ENCODE measurements at regions of chr2 and their contacts with region 1.

Region 1: GRCh38 chr2:18149645-18150246 is 271.3 kb downstream of the KCNS3 start:
- DNase-seq: peak; percentile 24
- H3K4me3 ChIP-seq: no peak overlapping the region
- H3K27ac ChIP-seq: no peak overlapping the region
- H3K4me1 ChIP-seq: no peaks in the 10 kb centered on the region
- H3K27me3 ChIP-seq: no peaks in the 10 kb centered on the region
- CTCF ChIP-seq: peak; percentile 82 to 84

Region 2: GRCh38 chr2:17719562-17720371 is 430.0 kb before region 1 on chr2:
- CTCF ChIA-PET with region 1: no interaction called
- dilution Hi-C with region 1: no loop called
- in situ Hi-C with region 1: no loop called
- intact Hi-C with region 1: loop called (anchors 1 kb)
- DNase-seq: peak; percentile 1
- H3K4me3 ChIP-seq: no peak overlapping the region
- H3K27ac ChIP-seq: no peak overlapping the region
- H3K4me1 ChIP-seq: no peaks in the 10 kb centered on the region
- H3K27me3 ChIP-seq: no peaks in the 10 kb centered on the region
- CTCF ChIP-seq: peak; percentile 71 to 74

Region 3: GRCh38 chr2:17753803-17754663 is 395.7 kb before region 1 on chr2 and contains the starts of genes GEN1 and SMC6:
- CTCF ChIA-PET with region 1: no interaction called
- dilution Hi-C with region 1: no loop called
- in situ Hi-C with region 1: no loop called
- intact Hi-C with region 1: loop called (anchors 10 kb)
- DNase-seq: peak; percentile 89
- H3K4me3 ChIP-seq: peak within 1 kb of the TSS; percentile 95 to 98 (median 97)
- H3K27ac ChIP-seq: peak within 1 kb of the TSS; percentile 94
- H3K4me1 ChIP-seq: peaks cover 27% of the 10 kb centered on the region
- H3K27me3 ChIP-seq: no peaks in the 10 kb centered on the region
- CTCF ChIP-seq: no peak
- total RNA-seq, gene GEN1: 10.0 to 27.3 TPM
- total RNA-seq, gene SMC6: 23.0 to 32.8 TPM

Region 4: GRCh38 chr2:18244845-18245244 is 95.1 kb after region 1 on chr2:
- CTCF ChIA-PET with region 1: no interaction called
- dilution Hi-C with region 1: no loop called
- in situ Hi-C with region 1: no loop called
- intact Hi-C with region 1: no loop called
- DNase-seq: no peak
- H3K4me3 ChIP-seq: no peak overlapping the region
- H3K27ac ChIP-seq: no peak overlapping the region
- H3K4me1 ChIP-seq: no peaks in the 10 kb centered on the region
- H3K27me3 ChIP-seq: no peaks in the 10 kb centered on the region
- CTCF ChIP-seq: no peak

Region 5: GRCh38 chr2:18284331-18284730 is 134.6 kb after region 1 on chr2:
- CTCF ChIA-PET with region 1: no interaction called
- dilution Hi-C with region 1: no loop called
- in situ Hi-C with region 1: no loop called
- intact Hi-C with region 1: no loop called
- DNase-seq: peak; percentile 81
- H3K4me3 ChIP-seq: no peak overlapping the region
- H3K27ac ChIP-seq: peak overlapping the region; percentile 25
- H3K4me1 ChIP-seq: peaks cover 12% of the 10 kb centered on the region
- H3K27me3 ChIP-seq: no peaks in the 10 kb centered on the region
- CTCF ChIP-seq: no peak

Measured in mammary epithelial cell (primary cell).